Aorta (tissue), 5 donors: ENCODE measurements at regions of chr1 and their contacts with region 1.

Region 1: DNA sequence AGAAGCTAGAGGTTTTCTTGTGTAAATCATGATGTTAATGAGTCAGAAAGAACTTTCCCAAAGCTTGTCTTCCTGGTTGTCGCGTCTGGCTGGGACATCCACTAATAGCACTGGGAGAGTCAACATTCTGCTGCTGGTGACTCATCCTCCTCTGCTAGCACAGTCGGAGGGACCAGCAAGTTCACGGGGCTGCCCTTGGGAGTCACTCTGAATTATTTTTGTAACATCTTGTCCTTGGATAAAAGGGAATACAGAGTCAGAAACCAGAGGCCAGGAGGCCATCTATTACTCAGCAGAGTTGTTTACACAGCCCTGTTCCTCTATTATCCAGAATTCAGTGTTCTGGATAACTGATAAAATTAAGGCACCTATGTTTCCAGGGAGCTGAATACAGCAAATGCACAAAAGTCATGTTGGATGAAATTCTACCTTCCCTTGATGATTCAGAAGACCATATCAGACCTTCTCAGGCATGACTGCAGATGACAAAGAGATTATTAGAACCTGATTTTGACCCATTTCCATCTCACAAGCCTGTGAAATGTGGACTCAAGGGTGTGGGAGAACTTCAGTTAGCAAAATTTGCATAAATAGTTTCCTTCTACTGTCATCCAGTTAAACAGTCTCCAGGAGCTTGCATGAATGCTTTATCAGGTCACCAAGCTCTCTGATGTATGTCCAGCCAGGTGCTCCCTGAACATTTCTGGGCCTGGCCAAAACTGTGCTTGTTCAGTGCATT is 68.1 kb downstream of the JAK1 start:
- DNase-seq: peak; percentile 90 to 91
- ATAC-seq: peak; percentile 95
- H3K4me3 ChIP-seq: no peak overlapping the region
- H3K27ac ChIP-seq: peak overlapping the region in 1 of 2 donors; percentile 36
- H3K4me1 ChIP-seq: peaks cover 0 to 2% of the 10 kb centered on the region in 2 donors
- H3K27me3 ChIP-seq: no peaks in the 10 kb centered on the region

Region 2: DNA sequence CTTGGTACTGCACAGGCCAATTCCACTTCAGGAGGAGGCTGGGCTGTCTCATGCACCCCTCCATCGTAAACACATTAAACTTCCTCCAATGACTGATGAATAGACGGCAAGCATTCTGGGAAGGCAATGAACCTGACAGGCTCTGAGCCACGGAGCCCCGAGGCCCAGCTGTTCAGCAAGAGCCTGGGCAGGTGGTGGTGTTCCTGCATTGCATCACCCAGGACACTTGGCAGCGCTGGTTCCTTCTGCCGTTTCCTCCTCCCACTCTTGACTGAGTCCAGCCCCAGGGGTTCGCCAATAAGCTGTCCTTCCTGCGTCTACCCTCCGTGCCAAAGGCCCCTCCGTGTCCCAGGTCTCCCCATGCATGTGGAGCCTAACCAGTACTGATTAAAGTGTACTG is 41.7 kb before region 1 on chr1:
- intact Hi-C with region 1: no loop called
- DNase-seq: no peak
- ATAC-seq: no peak
- H3K4me3 ChIP-seq: no peak overlapping the region
- H3K27ac ChIP-seq: no peak overlapping the region
- H3K4me1 ChIP-seq: no peaks in the 10 kb centered on the region
- H3K27me3 ChIP-seq: no peaks in the 10 kb centered on the region

Region 3: GRCh38 chr1:64933296-64934070 is 35.2 kb after region 1 on chr1:
- intact Hi-C with region 1: loop called in 1 of 2 experiments (anchors 5 kb)
- DNase-seq: peak in 1 of 2 donors; percentile 59
- ATAC-seq: peak; percentile 92
- H3K4me3 ChIP-seq: no peak overlapping the region
- H3K27ac ChIP-seq: peak overlapping the region; percentile 51 to 96
- H3K4me1 ChIP-seq: peaks cover 4 to 5% of the 10 kb centered on the region in 2 donors
- H3K27me3 ChIP-seq: no peaks in the 10 kb centered on the region

Region 4: GRCh38 chr1:64966158-64966971 is 68.1 kb after region 1 on chr1 and contains the start of gene JAK1:
- intact Hi-C with region 1: loop called (anchors 5 to 10 kb)
- DNase-seq: peak; percentile 93 to 96
- ATAC-seq: peak; percentile 93
- H3K4me3 ChIP-seq: peak within 1 kb of the TSS; percentile 95 to 100
- H3K27ac ChIP-seq: peak within 1 kb of the TSS; percentile 44 to 98
- H3K4me1 ChIP-seq: no peaks in the 10 kb centered on the region
- H3K27me3 ChIP-seq: peaks cover 0 to 2% of the 10 kb centered on the region in 2 donors
- total RNA-seq, gene JAK1: 115 to 132 TPM

Region 5: DNA sequence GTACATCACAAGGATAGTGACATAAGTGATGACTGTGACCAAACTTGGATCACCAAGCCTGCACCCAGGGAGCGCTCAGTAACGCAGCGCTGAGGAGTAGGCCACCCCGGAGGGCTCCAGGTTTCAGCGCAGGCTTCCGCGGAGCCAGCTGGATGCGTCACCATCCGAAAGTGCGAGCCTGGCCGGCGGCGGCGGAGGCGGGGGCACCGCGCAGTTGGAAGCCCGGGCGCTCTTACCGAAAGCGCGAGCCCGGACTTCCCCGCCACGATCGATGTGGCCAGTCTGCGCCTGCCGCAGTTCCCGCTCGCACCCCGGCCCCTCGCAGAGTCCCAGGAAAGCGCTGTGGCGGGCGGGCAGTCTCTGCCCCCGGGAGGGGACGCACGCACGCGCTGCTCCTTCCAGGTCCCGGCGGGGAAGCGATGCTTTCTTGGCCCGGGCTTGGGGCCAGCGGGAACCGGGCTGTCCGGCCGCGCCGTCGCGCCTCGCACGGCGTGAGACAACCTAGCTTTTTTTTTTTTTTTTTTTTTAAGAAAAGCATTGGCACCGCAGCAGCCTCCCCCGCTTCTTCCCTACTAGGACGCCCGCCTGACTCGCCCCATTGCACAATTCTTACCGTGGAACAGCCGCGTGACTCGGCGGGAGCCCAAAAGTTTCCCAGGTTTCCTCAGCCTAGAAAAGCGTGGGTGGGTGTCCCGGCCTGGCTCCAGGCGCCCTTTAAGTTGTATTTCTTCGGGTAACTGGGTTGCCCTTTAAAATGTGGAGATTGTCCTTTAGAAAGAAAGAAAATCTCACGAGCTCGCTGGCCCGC is 104.4 kb after region 1 on chr1:
- intact Hi-C with region 1: no loop called
- DNase-seq: peak; percentile 94 to 97
- ATAC-seq: peak; percentile 94
- H3K4me3 ChIP-seq: peak overlapping the region; percentile 63 to 68
- H3K27ac ChIP-seq: peak overlapping the region; percentile 97 to 98
- H3K4me1 ChIP-seq: peaks cover 0 to 2% of the 10 kb centered on the region in 2 donors
- H3K27me3 ChIP-seq: no peaks in the 10 kb centered on the region